HCT116 (cell line): ENCODE measurements at regions of chr9 and their contacts with region 1.

Region 1: DNA sequence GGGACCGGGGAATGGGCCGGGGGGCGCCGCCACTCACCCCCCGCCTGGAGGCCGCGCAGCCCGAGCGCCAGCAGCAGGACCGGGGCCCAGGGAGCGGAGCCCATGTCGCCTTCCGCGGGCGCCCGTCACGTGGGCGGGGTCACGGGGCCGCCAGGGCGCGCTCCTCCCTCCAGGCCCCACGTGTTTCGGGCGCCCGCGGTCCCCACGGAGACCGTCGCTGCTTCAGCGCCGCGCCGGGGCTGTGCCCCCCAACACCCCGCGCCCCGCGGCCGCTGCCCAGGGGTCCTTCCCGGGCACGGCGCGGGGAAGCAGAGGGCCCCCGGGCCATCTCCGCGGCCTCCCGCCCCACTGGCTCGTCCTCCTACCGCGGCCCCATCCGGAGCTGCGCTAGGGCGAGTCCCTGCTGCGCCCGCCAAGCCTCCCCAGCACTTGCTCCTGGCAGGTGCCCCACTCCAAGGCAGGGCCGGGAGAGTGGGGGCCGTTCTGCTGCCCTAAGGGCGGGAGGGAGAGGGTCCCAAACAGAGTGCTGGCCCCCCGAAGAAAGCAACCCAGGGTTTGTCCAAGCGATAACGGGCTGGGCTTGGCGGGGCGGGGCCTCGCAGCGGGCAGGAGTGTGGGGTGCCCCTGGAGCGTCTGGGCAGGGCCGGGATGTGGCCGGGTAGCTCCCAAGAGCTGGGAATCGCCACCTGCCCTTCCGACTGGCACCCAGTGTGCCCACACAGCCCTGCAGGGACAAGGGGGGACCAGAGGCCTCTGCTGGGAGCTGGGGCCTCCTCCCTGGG is at the start of gene DPP7:
- DNase-seq: no peak
- ATAC-seq: peak; percentile 80
- H3K4me3 ChIP-seq: peak within 1 kb of the TSS; percentile 54 to 67
- H3K27ac ChIP-seq: peak within 1 kb of the TSS; percentile 72
- H3K4me1 ChIP-seq: peaks cover 4 to 19% of the 10 kb centered on the region in 2 experiments
- H3K27me3 ChIP-seq: no peaks in the 10 kb centered on the region
- CTCF ChIP-seq: no peak
- POLR2A ChIP-seq: no peak
- RAD21 ChIP-seq: no peak
- total RNA-seq, gene DPP7: 291 TPM

Region 2: DNA sequence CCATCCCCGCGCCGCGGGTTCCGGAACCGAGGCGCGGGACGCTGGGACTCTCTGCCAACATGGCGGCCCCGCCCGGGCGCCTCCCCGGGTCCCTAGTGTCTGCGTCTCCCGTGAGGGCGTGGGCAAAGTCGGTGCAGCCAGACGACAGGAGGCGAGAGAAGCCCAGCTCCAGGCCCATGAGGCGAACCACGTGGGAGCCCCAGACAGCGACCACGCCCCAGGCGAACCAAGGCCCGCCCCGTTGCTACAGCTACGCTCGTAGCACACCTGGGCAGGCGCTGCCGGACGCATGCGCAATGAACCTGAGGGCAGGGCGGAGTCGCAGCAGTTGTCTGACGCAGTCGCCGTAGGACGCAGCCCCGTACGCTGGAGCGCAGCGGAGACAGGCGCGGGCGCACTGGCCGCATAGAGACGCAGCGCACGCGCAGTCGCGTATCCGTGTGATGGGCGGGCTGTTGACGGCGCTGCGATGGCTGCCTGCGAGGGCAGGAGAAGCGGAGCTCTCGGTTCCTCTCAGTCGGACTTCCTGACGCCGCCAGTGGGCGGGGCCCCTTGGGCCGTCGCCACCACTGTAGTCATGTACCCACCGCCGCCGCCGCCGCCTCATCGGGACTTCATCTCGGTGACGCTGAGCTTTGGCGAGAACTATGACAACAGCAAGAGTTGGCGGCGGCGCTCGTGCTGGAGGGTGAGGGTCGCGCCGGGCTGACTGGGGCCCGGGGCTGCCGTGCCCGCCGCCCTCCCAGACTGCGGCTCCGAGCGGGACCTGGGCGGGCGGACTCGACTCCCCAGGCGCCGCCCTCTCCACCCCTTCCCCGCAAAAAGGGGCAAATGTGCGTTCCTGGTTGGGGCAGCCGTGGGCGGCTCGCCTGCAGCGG is 28.0 kb before region 1 on chr9 and contains the start of gene MAN1B1:
- CTCF ChIA-PET with region 1: no interaction called
- POLR2A ChIA-PET with region 1: interaction called, 5 read pairs
- RAD21 ChIA-PET with region 1: no interaction called
- intact Hi-C with region 1: loop called (anchors 1 kb)
- DNase-seq: peak; percentile 98
- ATAC-seq: peak; percentile 83
- H3K4me3 ChIP-seq: peak within 1 kb of the TSS; percentile 83 to 96
- H3K27ac ChIP-seq: peak within 1 kb of the TSS; percentile 98
- H3K4me1 ChIP-seq: peaks cover 38 to 56% of the 10 kb centered on the region in 2 experiments
- H3K27me3 ChIP-seq: no peaks in the 10 kb centered on the region
- CTCF ChIP-seq: no peak
- POLR2A ChIP-seq: no peak
- RAD21 ChIP-seq: no peak
- total RNA-seq, gene MAN1B1: 50.9 TPM

Region 3: GRCh38 chr9:137162505-137163100 is 47.8 kb after region 1 on chr9:
- CTCF ChIA-PET with region 1: no interaction called
- POLR2A ChIA-PET with region 1: interaction called, 4 read pairs
- RAD21 ChIA-PET with region 1: no interaction called
- intact Hi-C with region 1: loop called (anchors 2 kb)
- DNase-seq: no peak
- ATAC-seq: peak; percentile 50
- H3K4me3 ChIP-seq: peak overlapping the region; percentile 59 to 70
- H3K27ac ChIP-seq: peak overlapping the region; percentile 82
- H3K4me1 ChIP-seq: peaks cover 8 to 52% of the 10 kb centered on the region in 2 experiments; a peak in 3 of 4 replicates
- H3K27me3 ChIP-seq: no peaks in the 10 kb centered on the region
- CTCF ChIP-seq: no peak; a peak in 1 of 6 replicates
- POLR2A ChIP-seq: no peak
- RAD21 ChIP-seq: no peak